Heart left ventricle (tissue), 16 donors: ENCODE measurements at regions of chr13 and their contacts with region 1.

Region 1: DNA sequence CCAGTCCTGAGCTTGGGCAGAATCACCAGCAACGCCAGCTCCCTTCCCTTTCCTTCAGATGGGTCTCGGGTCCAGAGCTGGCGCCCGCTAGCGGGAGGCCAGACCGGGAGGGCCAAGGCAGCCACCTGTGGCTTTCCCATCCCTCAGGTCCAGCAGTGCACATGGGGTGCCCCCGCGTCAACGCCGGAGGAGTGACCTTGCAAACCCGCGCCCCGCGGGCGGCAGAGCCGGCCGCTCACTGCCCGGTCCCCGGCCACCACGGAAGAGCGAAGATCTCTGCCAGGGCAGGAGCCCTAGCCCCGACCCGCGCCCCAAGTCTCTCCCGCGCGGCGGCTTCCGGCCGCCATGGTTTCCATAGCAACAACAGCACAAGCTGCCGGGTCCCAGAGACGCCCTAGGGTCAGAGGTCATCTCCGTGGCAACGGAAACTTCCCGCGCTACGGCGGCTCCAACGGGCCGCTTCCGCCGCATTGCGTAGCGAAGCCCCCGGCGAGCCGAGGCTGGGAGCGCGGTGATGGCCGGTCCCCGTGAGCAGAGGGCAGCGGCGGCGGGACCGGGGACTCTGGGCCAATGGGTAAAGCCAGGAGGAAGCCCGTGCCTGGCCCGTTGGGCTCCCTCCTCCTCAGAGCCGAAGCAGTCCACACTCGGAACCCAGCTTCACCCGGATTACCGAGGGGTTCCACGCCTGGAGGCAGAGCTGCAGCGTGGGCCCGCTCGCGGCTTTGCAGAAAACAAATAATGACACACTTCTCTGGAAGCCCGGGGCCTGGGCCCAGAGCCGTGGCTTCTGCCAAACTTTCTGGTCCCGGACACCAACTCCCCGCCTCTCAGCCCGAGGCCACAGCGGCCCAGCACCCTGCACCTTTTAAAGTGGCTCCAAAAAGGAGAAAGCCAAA is 7.4 kb downstream of the FGF14 start:
- DNase-seq: peak; percentile 95 to 97 (median 97)
- ATAC-seq: peak; percentile 89 to 99 (median 98)
- H3K4me3 ChIP-seq: peak overlapping the region; percentile 54 to 99 (median 83)
- H3K27ac ChIP-seq: peak overlapping the region; percentile 29 to 92 (median 84)
- H3K4me1 ChIP-seq: peaks cover 0 to 17% (median 10%) of the 10 kb centered on the region in 12 donors
- H3K27me3 ChIP-seq: peaks cover 0 to 13% (median 0%) of the 10 kb centered on the region in 9 donors
- CTCF ChIP-seq: peak in 7 of 12 donors; percentile 12 to 43 (median 30)
- POLR2A ChIP-seq: peak in 1 of 2 donors; percentile 64

Region 2: GRCh38 chr13:102141625-102142472 is 252.6 kb before region 1 on chr13:
- intact Hi-C with region 1: loop called in 2 of 10 experiments (anchors 5 to 10 kb)
- DNase-seq: no peak
- ATAC-seq: peak in 1 of 4 donors; percentile 57
- H3K4me3 ChIP-seq: peak overlapping the region in 1 of 12 donors; percentile 2
- H3K27ac ChIP-seq: peak overlapping the region in 1 of 12 donors; percentile 24
- H3K4me1 ChIP-seq: peaks cover 0 to 17% (median 0%) of the 10 kb centered on the region in 12 donors
- H3K27me3 ChIP-seq: no peaks in the 10 kb centered on the region
- CTCF ChIP-seq: peak; percentile 49 to 80 (median 64)
- POLR2A ChIP-seq: no peak

Region 3: GRCh38 chr13:102197193-102197592 is 197.2 kb before region 1 on chr13:
- intact Hi-C with region 1: loop called in 1 of 10 experiments (anchors 5 kb)
- DNase-seq: no peak
- ATAC-seq: peak in 2 of 4 donors; percentile 52 to 56
- H3K4me3 ChIP-seq: no peak overlapping the region
- H3K27ac ChIP-seq: no peak overlapping the region
- H3K4me1 ChIP-seq: peaks cover 0 to 1% (median 0%) of the 10 kb centered on the region in 12 donors
- H3K27me3 ChIP-seq: no peaks in the 10 kb centered on the region
- CTCF ChIP-seq: peak in 7 of 12 donors; percentile 12 to 43 (median 34)
- POLR2A ChIP-seq: no peak

Region 4: GRCh38 chr13:102291587-102292218 is 102.7 kb before region 1 on chr13:
- intact Hi-C with region 1: loop called in 1 of 10 experiments (anchors 10 kb)
- DNase-seq: no peak
- ATAC-seq: peak in 1 of 4 donors; percentile 49
- H3K4me3 ChIP-seq: no peak overlapping the region
- H3K27ac ChIP-seq: no peak overlapping the region
- H3K4me1 ChIP-seq: peaks cover 0 to 24% (median 10%) of the 10 kb centered on the region in 12 donors
- H3K27me3 ChIP-seq: no peaks in the 10 kb centered on the region
- CTCF ChIP-seq: no peak
- POLR2A ChIP-seq: no peak

Region 5: DNA sequence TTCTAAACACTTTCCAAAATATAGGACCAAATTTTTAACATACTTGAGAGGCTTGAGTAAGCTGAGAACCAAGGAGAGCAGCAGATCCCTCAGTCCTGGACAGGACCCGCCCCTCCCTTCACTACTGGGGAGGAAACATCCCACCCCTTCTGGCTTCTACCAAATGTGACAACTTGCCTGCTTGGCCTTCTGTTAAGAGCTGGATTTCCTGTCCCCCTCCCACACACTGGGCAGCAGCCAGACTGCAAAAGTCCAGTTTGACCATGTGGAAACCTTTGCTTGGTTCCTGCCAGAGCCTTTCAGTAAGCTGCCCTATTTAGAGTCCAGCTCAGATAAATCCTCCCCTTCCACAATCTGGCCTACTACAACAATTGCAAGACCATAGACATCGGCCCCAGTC is 76.8 kb before region 1 on chr13:
- intact Hi-C with region 1: loop called in 2 of 10 experiments (anchors 5 to 10 kb)
- DNase-seq: peak; percentile 83 to 90 (median 89)
- ATAC-seq: peak; percentile 87 to 98 (median 97)
- H3K4me3 ChIP-seq: no peak overlapping the region
- H3K27ac ChIP-seq: peak overlapping the region in 8 of 12 donors; percentile 46 to 78 (median 60)
- H3K4me1 ChIP-seq: peaks cover 0 to 33% (median 15%) of the 10 kb centered on the region in 12 donors
- H3K27me3 ChIP-seq: no peaks in the 10 kb centered on the region
- CTCF ChIP-seq: no peak
- POLR2A ChIP-seq: no peak

Region 6: GRCh38 chr13:102845630-102846260 is 451.3 kb after region 1 on chr13 and contains the start of gene ERCC5:
- intact Hi-C with region 1: no loop called
- DNase-seq: peak; percentile 94 to 97 (median 95)
- ATAC-seq: peak; percentile 90 to 96 (median 94)
- H3K4me3 ChIP-seq: peak within 1 kb of the TSS; percentile 67 to 96 (median 92)
- H3K27ac ChIP-seq: peak within 1 kb of the TSS; percentile 92 to 99 (median 96)
- H3K4me1 ChIP-seq: peaks cover 0 to 31% (median 19%) of the 10 kb centered on the region in 12 donors
- H3K27me3 ChIP-seq: no peaks in the 10 kb centered on the region
- CTCF ChIP-seq: peak in 2 of 12 donors; percentile 7 to 10
- POLR2A ChIP-seq: peak in 1 of 2 donors; percentile 78
- total RNA-seq, gene ERCC5: 27.4 to 61.7 (median 31.4) TPM